K562 (cell line): ENCODE measurements at regions of chr3 and their contacts with region 1.

Region 1: GRCh38 chr3:32947789-32948238 is 3.6 kb upstream of the CCR4 start:
- DNase-seq: peak; percentile 55 to 94 (median 66)
- ATAC-seq: peak; percentile 94
- H3K4me3 ChIP-seq: no peak overlapping the region
- H3K27ac ChIP-seq: no peak overlapping the region
- H3K4me1 ChIP-seq: peaks cover 3 to 10% of the 10 kb centered on the region in 2 experiments; a peak in 3 of 5 replicates
- H3K27me3 ChIP-seq: no peaks in the 10 kb centered on the region
- CTCF ChIP-seq: peak; percentile 93 to 95 (median 94)
- EP300 ChIP-seq: no peak
- POLR2A ChIP-seq: no peak
- RAD21 ChIP-seq: peak; percentile 95 to 100

Region 2: DNA sequence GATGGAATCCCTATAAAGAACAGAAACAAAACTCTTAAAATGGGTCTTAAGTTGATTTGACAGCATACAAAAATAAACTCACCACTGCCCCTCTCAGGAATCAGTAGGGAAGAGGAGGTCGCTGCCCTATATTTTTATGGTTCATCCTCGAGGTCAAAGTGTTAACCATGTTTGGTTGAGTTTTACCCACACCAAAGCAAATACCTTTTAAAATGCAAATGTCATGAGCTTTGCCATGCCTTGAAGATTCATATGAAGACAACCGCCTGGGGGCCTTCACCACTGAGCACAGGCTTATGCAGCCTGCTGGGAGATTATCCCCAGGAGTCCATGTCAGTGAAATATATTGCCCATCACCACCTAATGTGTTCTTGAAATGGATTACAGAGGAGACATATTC is 83.0 kb after region 1 on chr3:
- CTCF ChIA-PET with region 1: no interaction called
- POLR2A ChIA-PET with region 1: no interaction called
- in situ Hi-C with region 1: no loop called
- intact Hi-C with region 1: loop called (anchors 1 kb)
- DNase-seq: peak in 2 of 4 experiments; percentile 29 to 30
- ATAC-seq: peak; percentile 63
- H3K4me3 ChIP-seq: no peak overlapping the region
- H3K27ac ChIP-seq: no peak overlapping the region
- H3K4me1 ChIP-seq: peaks cover 3% of the 10 kb centered on the region in 2 experiments; a peak in 2 of 5 replicates
- H3K27me3 ChIP-seq: no peaks in the 10 kb centered on the region
- CTCF ChIP-seq: peak; percentile 36 to 45 (median 36); a peak in 4 of 6 replicates
- EP300 ChIP-seq: no peak
- POLR2A ChIP-seq: no peak
- RAD21 ChIP-seq: peak in 1 of 2 experiments; percentile 48; a peak in 2 of 4 replicates

Region 3: DNA sequence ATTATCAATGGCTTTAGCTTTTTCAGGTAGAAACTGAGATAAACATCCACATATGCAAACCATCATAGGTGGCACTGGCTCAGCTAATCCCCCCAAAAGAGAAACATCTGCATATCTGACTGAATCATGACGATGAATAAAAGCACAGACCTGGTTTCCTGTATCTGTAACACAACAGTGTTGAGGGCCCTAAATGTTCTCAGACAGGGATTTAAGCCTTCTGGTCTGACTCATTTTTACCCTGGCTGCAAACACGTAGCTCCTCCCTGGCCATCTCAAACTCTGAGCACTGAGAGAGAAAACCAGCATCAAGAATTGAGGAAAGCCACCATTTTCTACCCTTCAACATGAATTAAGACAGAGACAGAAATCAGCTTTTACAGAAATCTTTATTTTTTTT is 114.0 kb after region 1 on chr3:
- CTCF ChIA-PET with region 1: interaction called, 3 read pairs
- POLR2A ChIA-PET with region 1: no interaction called
- in situ Hi-C with region 1: no loop called
- intact Hi-C with region 1: loop called (anchors 1 kb)
- DNase-seq: no peak
- ATAC-seq: no peak
- H3K4me3 ChIP-seq: no peak overlapping the region
- H3K27ac ChIP-seq: no peak overlapping the region
- H3K4me1 ChIP-seq: peaks cover 1 to 2% of the 10 kb centered on the region in 2 experiments; a peak in 1 of 5 replicates
- H3K27me3 ChIP-seq: no peaks in the 10 kb centered on the region
- CTCF ChIP-seq: no peak
- EP300 ChIP-seq: no peak
- POLR2A ChIP-seq: no peak
- RAD21 ChIP-seq: no peak

Region 4: GRCh38 chr3:33131331-33132018 is 183.7 kb after region 1 on chr3:
- CTCF ChIA-PET with region 1: no interaction called
- POLR2A ChIA-PET with region 1: no interaction called
- in situ Hi-C with region 1: no loop called
- intact Hi-C with region 1: loop called (anchors 5 kb)
- DNase-seq: peak; percentile 71 to 78 (median 74)
- ATAC-seq: peak; percentile 94
- H3K4me3 ChIP-seq: no peak overlapping the region
- H3K27ac ChIP-seq: no peak overlapping the region
- H3K4me1 ChIP-seq: no peaks in the 10 kb centered on the region
- H3K27me3 ChIP-seq: no peaks in the 10 kb centered on the region
- CTCF ChIP-seq: peak; percentile 76 to 91 (median 82)
- EP300 ChIP-seq: no peak
- POLR2A ChIP-seq: no peak
- RAD21 ChIP-seq: peak; percentile 85 to 92

Region 5: DNA sequence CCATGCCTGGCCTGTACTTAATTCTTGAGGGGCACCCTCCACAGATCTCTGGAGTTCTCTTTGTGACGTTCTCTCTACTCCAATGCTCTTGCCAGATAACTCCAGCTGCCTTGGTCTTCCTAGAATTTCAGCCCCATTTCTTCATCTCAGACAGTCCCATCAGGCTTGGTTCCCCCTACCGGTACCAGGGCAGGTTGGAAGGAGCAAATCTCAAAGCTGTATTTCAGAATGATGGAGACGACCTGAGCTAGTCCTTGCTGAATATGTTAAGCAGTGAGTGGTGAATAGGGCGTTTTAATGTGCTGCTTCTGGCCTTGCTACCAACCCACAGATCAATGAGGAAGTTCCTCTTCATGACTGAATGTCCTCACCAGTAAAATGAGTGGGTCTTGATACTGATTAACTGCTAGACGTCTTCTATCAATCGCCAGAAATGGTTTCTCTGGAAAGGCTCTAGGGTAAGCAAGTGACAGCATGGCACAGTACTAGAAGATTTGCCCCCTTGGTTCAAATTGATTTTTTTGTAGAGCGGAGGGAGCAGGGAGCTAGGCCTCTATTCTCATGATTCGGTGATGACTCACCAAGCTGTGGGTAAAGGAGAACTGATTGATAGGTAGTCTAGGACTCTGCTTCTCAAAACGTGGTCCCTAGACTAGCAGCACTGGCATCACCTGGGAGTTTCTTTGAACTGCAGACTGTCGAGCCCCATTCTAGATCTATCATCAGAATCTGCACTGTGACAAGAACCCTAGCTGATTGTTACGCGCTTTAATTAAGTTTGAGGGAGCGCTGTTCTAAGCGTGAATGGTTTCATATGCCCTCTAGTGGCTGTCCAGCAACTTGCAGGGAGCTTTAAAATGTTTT is 424.6 kb after region 1 on chr3:
- CTCF ChIA-PET with region 1: interaction called, 11 read pairs
- POLR2A ChIA-PET with region 1: interaction called, 4 read pairs
- in situ Hi-C with region 1: loop called (anchors 10 kb)
- intact Hi-C with region 1: loop called (anchors 1 kb)
- DNase-seq: peak; percentile 56 to 71 (median 68)
- ATAC-seq: peak; percentile 81
- H3K4me3 ChIP-seq: no peak overlapping the region
- H3K27ac ChIP-seq: no peak overlapping the region
- H3K4me1 ChIP-seq: no peaks in the 10 kb centered on the region; a peak in 2 of 5 replicates
- H3K27me3 ChIP-seq: no peaks in the 10 kb centered on the region
- CTCF ChIP-seq: peak; percentile 90 to 97 (median 95)
- EP300 ChIP-seq: no peak
- POLR2A ChIP-seq: no peak
- RAD21 ChIP-seq: peak; percentile 91 to 96